Calu3 (cell line): ENCODE measurements at regions of chr10 and their contacts with region 1.

Region 1: GRCh38 chr10:51602326-51602725 is 97.1 kb downstream of the CSTF2T start:
- DNase-seq: no peak
- H3K4me3 Mint-ChIP-seq: no peak overlapping the region
- H3K27ac Mint-ChIP-seq: no peak overlapping the region
- H3K4me1 Mint-ChIP-seq: no peaks in the 10 kb centered on the region
- H3K27me3 Mint-ChIP-seq: no peaks in the 10 kb centered on the region
- CTCF ChIP-seq: no peak

Region 2: GRCh38 chr10:50585921-50586739 is 1016.2 kb before region 1 on chr10:
- CTCF ChIA-PET with region 1: no interaction called
- intact Hi-C with region 1: no loop called
- DNase-seq: no peak
- H3K4me3 Mint-ChIP-seq: no peak overlapping the region
- H3K27ac Mint-ChIP-seq: no peak overlapping the region
- H3K4me1 Mint-ChIP-seq: peaks cover 39% of the 10 kb centered on the region
- H3K27me3 Mint-ChIP-seq: no peaks in the 10 kb centered on the region
- CTCF ChIP-seq: no peak

Region 3: GRCh38 chr10:51918440-51918839 is 316.1 kb after region 1 on chr10:
- CTCF ChIA-PET with region 1: interaction called, 10 read pairs
- intact Hi-C with region 1: no loop called
- DNase-seq: no peak
- H3K4me3 Mint-ChIP-seq: no peak overlapping the region
- H3K27ac Mint-ChIP-seq: no peak overlapping the region
- H3K4me1 Mint-ChIP-seq: no peaks in the 10 kb centered on the region
- H3K27me3 Mint-ChIP-seq: no peaks in the 10 kb centered on the region
- CTCF ChIP-seq: no peak